AG04449 (cell line): ENCODE measurements at regions of chr20 and their contacts with region 1.

Region 1: GRCh38 chr20:37384683-37385174 is 38.8 kb downstream of the SRC start:
- DNase-seq: no peak
- H3K4me3 ChIP-seq: peak overlapping the region; percentile 23; the same call in 1 of the 2 replicates
- CTCF ChIP-seq: peak; percentile 98

Region 2: GRCh38 chr20:37276494-37277252 is 108.1 kb before region 1 on chr20:
- CTCF ChIA-PET with region 1: interaction called, 326 read pairs
- POLR2A ChIA-PET with region 1: no interaction called
- DNase-seq: no peak
- H3K4me3 ChIP-seq: no peak overlapping the region
- CTCF ChIP-seq: peak; percentile 50

Region 3: GRCh38 chr20:37417617-37418467 is 33.1 kb after region 1 on chr20:
- CTCF ChIA-PET with region 1: no interaction called
- POLR2A ChIA-PET with region 1: no interaction called
- DNase-seq: no peak
- H3K4me3 ChIP-seq: no peak overlapping the region
- CTCF ChIP-seq: no peak